Heart left ventricle (tissue), 16 donors: ENCODE measurements at regions of chr4 and their contacts with region 1.

Region 1: DNA sequence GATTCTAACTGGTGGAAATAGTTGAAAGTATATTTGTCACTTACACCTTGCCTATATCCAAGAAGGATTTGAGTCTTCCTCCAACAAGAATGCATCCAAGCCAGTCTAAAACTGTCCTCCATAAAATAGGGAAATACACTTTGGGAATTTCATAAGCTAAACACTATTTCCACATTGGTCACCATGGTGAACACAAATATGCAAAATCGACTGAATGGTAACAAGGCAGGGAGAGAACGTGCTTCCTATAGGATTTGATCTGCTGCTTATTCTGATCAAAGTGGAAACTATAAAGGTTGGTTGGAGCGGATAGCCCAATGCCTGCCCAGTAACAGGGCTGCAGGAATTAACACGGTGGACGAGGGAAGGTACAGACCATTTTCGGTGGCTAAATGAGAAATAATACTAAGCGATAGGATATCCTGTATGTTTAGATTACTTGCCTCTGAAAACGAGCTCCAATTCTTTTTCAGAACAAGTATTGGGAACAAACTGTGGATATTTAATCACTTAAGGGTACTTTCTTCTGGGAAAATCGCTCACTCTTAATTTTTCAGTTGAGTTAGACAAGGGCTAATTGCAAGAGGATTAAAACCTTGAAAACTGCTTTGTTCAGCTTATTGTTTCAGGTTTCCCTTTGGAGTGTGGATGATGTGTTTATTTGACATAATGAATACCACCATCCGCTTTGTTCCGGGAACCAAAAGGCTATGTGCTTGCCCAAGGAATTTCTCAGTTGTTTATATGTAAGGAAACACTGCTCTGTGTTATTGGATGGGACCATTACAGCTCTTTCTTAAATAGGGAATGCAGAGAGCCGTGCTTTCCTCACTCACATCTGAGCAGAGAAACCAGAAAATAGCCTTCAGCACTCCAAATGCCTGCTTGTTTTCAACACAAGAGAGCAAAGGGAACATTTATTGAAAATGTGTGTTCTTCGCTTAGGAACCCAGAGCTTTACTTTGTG is 194.4 kb downstream of the CBR4 start:
- DNase-seq: no peak
- ATAC-seq: peak in 1 of 4 donors; percentile 34
- H3K4me3 ChIP-seq: no peak overlapping the region
- H3K27ac ChIP-seq: peak overlapping the region; percentile 22 to 89 (median 82)
- H3K4me1 ChIP-seq: peaks cover 0 to 53% (median 27%) of the 10 kb centered on the region in 12 donors
- H3K27me3 ChIP-seq: no peaks in the 10 kb centered on the region
- CTCF ChIP-seq: no peak
- POLR2A ChIP-seq: no peak

Region 2: DNA sequence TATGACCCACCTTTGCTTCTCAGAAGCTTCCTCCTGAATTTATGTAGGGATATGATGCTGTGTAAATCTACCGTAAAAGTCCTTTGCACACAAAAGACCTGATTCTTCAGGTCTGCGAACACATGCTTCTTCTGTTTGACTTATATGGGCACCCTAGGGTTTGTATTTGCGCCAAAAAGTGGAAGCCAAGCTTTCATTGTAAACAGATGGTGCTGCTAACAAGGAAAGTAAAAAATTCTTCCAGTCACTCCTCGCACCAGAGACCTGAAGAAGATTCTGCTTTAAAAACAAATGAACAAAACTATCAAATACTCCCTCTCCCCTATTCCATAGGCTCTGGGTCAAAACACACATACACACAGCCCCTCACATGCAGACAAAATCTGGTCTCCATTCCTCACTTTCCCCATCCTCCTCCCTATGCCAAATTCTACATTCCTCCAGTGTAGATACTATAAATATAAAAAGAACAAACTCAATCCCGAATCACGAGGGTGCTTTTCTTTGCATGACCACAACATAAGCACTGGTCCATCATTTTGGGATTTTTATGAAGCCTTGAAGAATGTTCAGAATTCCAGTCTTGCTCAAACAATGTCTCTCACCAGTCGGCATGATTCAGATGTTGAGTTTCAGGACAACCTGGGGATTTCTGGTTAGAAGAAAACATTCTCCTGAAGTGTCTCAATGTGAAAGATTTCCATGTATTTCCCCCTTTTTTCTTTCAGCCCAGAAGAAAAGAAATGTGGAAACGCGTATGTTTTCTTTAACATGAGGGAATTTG is 193.7 kb before region 1 on chr4:
- intact Hi-C with region 1: no loop called
- DNase-seq: no peak
- ATAC-seq: no peak
- H3K4me3 ChIP-seq: no peak overlapping the region
- H3K27ac ChIP-seq: peak overlapping the region in 8 of 12 donors; percentile 8 to 91 (median 64)
- H3K4me1 ChIP-seq: peaks cover 0 to 56% (median 9%) of the 10 kb centered on the region in 12 donors
- H3K27me3 ChIP-seq: no peaks in the 10 kb centered on the region
- CTCF ChIP-seq: no peak
- POLR2A ChIP-seq: no peak

Region 3: DNA sequence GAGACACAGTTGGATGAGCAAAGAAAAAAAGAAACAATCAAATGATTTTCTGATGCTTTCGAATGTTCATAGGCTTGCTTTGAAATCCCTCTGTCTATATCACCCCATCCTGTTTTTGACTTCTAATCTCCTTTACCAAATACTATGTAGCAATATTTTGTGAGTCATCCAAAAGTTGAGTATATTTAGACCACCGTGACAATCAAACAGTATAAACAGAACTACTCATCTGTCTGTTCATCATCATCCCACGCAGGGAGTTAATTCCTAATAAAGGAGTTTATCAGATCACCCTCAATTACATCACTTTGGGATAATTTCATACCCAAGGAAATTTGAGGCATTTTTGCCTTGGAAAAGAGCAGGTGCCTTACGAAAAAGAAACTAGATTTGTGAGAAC is 18.5 kb before region 1 on chr4:
- intact Hi-C with region 1: loop called in 1 of 10 experiments (anchors 2 kb)
- DNase-seq: no peak
- ATAC-seq: peak in 3 of 4 donors; percentile 32 to 78 (median 64)
- H3K4me3 ChIP-seq: no peak overlapping the region
- H3K27ac ChIP-seq: peak overlapping the region in 10 of 12 donors; percentile 22 to 73 (median 58)
- H3K4me1 ChIP-seq: peaks cover 0 to 38% (median 15%) of the 10 kb centered on the region in 12 donors
- H3K27me3 ChIP-seq: no peaks in the 10 kb centered on the region
- CTCF ChIP-seq: no peak
- POLR2A ChIP-seq: no peak

Region 4: GRCh38 chr4:168864821-168865541 is 49.3 kb after region 1 on chr4:
- intact Hi-C with region 1: loop called in 1 of 10 experiments (anchors 2 kb)
- DNase-seq: no peak
- ATAC-seq: no peak
- H3K4me3 ChIP-seq: no peak overlapping the region
- H3K27ac ChIP-seq: peak overlapping the region in 5 of 12 donors; percentile 1 to 63 (median 28)
- H3K4me1 ChIP-seq: peaks cover 0 to 84% (median 37%) of the 10 kb centered on the region in 12 donors
- H3K27me3 ChIP-seq: no peaks in the 10 kb centered on the region
- CTCF ChIP-seq: peak in 6 of 12 donors; percentile 12 to 48 (median 31)
- POLR2A ChIP-seq: no peak